ENCODE measurements at regions of chr11 and their contacts with region 1.

Region 1: GRCh38 chr11:76444384-76445123 is at the start of gene EMSY:
- DNase-seq: peak; percentile 99
- H3K4me3 ChIP-seq: peak within 1 kb of the TSS; percentile 83 to 99 (median 96)
- H3K27ac ChIP-seq: peak within 1 kb of the TSS; percentile 90 to 98 (median 96)
- H3K4me1 ChIP-seq: peaks cover 0 to 25% (median 22%) of the 10 kb centered on the region in 4 donors
- H3K27me3 ChIP-seq: no peaks in the 10 kb centered on the region
- CTCF ChIP-seq: no peak
- EP300 ChIP-seq: peak in 1 of 4 donors; percentile 44
- POLR2A ChIP-seq: peak; percentile 99
- total RNA-seq, gene EMSY: 20.8 to 51.8 (median 31.5) TPM

Region 2: DNA sequence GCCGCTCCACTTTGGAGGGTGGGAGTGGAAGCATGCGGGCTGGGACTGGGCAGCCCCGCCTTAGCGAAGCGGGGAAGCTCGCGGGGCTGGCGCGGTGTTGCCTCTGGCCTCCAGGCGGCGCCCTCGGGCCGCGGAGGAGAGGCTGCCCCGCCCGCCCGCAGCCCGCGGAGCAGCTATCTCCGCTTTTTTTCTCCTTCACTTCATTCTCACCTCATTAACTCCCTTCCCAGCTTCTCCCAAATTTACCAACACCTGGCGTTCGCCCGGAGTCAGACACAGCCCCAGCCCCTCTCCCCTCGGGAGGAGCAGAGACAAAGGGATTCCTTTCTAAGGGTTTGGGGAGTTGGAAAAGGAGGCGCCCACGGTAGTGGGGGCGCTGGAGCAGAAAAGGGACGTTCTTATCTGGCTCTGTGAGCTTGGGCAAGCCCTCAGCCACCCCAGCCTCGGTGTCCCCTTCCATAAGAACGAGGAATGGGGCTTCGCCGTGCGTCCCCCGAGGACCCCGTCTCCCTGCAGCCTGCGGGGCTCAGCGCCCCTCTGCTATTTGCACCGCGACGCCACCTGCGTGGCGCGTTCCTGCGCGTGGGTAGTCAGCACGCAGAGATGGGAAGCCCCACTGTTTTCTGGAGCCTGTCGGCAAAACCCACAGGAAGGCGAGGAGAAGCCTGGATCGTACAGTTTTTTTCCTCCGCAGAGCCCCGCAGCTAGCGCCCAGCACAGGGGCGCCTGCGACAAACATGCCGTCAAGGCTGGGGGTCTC is 236.7 kb before region 1 on chr11:
- intact Hi-C with region 1: loop called (anchors 10 kb)
- DNase-seq: peak; percentile 89
- H3K4me3 ChIP-seq: peak overlapping the region; percentile 22 to 53 (median 46)
- H3K27ac ChIP-seq: no peak overlapping the region
- H3K4me1 ChIP-seq: peaks cover 0 to 58% (median 51%) of the 10 kb centered on the region in 4 donors
- H3K27me3 ChIP-seq: peaks cover 14 to 89% (median 55%) of the 10 kb centered on the region in 3 donors
- CTCF ChIP-seq: peak; percentile 83 to 96 (median 92)
- EP300 ChIP-seq: no peak
- POLR2A ChIP-seq: no peak

Region 3: DNA sequence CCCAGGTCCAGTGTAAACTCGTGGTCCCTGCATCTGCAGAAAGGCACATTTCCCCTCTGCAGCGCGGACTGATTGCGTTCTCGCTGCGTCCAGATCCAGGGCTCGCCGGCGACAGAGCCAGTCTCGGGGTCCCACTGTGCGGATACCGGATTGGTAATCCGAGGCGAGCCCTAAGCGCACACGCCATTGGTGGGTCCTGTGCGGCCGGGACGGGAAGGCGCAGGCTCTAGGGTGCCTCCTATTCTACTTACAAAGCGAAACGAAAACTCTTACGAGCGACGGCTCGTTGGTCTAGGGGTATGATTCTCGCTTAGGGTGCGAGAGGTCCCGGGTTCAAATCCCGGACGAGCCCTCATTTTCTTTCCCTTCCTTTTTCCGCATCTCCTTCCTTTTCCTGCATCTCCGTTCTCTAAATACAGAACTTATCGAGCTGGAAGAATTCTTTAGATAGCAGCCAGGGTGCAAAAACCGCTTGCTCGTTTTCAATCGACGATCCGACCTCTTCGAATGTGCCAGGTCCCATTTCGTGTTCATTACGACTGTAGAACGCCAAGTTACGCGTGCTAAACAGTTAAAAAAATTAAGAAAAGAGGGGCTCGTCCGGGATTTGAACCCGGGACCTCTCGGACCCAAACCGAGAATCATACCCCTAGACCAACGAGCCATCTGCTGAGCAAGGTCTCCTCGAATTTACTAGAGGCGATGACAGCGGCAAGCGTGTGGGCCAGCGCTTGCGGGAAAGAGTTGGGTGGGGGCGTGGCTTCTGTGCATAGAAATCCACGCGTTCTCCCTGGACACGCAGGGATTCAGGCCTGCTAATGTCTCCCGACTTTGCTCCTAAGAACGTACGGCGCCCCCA is 209.1 kb before region 1 on chr11:
- intact Hi-C with region 1: loop called (anchors 1 kb)
- DNase-seq: peak; percentile 95
- H3K4me3 ChIP-seq: peak overlapping the region; percentile 48 to 83 (median 74)
- H3K27ac ChIP-seq: peak overlapping the region; percentile 83 to 90 (median 89)
- H3K4me1 ChIP-seq: peaks cover 0 to 23% (median 17%) of the 10 kb centered on the region in 4 donors
- H3K27me3 ChIP-seq: no peaks in the 10 kb centered on the region
- CTCF ChIP-seq: no peak
- EP300 ChIP-seq: no peak
- POLR2A ChIP-seq: peak in 1 of 2 donors; percentile 33

Region 4: DNA sequence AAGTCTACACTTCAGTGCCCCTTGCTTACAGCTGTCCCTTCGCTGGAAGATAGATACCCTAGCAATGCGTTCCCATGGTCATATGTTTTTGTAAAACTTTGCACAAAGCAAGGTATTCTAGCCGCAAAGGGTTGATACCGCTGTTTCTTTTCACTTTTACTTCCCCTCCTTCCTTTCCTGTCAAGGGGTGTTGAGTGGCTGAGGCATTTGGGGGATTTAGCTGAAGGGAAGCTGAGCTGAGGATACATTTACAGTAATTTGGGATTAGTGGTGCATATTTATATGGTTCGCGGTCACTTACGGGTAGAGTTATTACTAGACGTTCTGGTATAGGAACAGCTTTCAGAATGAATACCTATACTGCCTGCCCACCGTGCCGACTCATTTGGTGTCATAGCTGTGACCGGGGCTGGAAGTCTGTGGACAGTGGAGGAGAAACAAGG is 151.3 kb before region 1 on chr11:
- intact Hi-C with region 1: no loop called
- DNase-seq: no peak
- H3K4me3 ChIP-seq: no peak overlapping the region
- H3K27ac ChIP-seq: no peak overlapping the region
- H3K4me1 ChIP-seq: no peaks in the 10 kb centered on the region
- H3K27me3 ChIP-seq: no peaks in the 10 kb centered on the region
- CTCF ChIP-seq: no peak
- EP300 ChIP-seq: no peak
- POLR2A ChIP-seq: no peak

Region 5: GRCh38 chr11:76380967-76381719 is 63.4 kb before region 1 on chr11 and contains the starts of genes GVQW3 and THAP12:
- intact Hi-C with region 1: loop called (anchors 1 kb)
- DNase-seq: peak; percentile 99
- H3K4me3 ChIP-seq: peak within 1 kb of the TSS; percentile 69 to 92 (median 86)
- H3K27ac ChIP-seq: peak within 1 kb of the TSS; percentile 82 to 86 (median 86)
- H3K4me1 ChIP-seq: peaks cover 0 to 43% (median 28%) of the 10 kb centered on the region in 4 donors
- H3K27me3 ChIP-seq: no peaks in the 10 kb centered on the region
- CTCF ChIP-seq: no peak
- EP300 ChIP-seq: peak in 1 of 4 donors; percentile 25
- POLR2A ChIP-seq: peak in 1 of 2 donors; percentile 23
- total RNA-seq, gene GVQW3: 0.41 to 4.7 (median 2.2) TPM
- total RNA-seq, gene THAP12: 27.7 to 35.0 (median 31.4) TPM

Region 6: GRCh38 chr11:76526878-76527277 is 82.3 kb after region 1 on chr11:
- intact Hi-C with region 1: no loop called
- DNase-seq: no peak
- H3K4me3 ChIP-seq: no peak overlapping the region
- H3K27ac ChIP-seq: no peak overlapping the region
- H3K4me1 ChIP-seq: peaks cover 0 to 6% (median 2%) of the 10 kb centered on the region in 4 donors
- H3K27me3 ChIP-seq: no peaks in the 10 kb centered on the region
- CTCF ChIP-seq: no peak
- EP300 ChIP-seq: no peak
- POLR2A ChIP-seq: no peak

Region 7: DNA sequence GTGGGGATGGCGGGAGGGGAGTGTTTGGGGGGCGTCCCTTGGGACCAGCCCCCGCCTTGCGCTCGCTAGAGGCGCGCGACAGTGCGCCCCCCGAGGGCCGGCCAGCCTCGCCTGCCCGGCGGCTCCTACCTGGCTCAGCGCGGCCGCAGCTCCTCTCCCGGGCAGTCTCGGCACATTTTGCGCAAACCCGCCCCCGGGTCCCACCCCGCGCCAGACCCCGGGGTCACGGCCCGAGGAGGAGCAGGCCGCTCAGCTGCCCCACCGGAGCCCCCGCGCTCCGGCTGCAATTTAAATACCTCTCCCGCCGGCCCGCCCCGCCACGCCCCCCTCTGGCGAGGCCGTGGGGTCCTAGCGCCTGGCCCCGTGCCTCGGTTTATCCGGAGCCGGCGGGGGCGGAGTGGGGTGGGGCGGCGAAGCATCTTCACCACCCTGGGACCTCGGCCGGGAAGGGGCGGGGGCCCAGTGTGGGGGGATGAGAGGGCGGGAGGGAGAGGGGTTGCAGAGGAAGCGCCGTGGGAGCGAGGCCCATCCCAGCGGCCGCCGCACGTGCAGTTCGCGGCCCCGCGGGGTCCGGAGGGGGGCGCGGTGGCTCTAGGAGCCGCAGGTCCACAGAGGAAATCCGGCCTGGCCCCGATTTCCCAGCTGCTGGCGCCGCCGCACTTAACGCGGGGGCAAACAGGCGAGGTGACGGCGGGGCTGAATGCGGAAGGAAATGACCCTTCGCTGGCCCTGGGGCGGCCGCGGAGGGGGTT is 226.1 kb after region 1 on chr11 and contains the start of gene LRRC32:
- intact Hi-C with region 1: loop called (anchors 10 kb)
- DNase-seq: peak; percentile 77
- H3K4me3 ChIP-seq: peak within 1 kb of the TSS; percentile 31 to 57 (median 49)
- H3K27ac ChIP-seq: peak within 1 kb of the TSS; percentile 43 to 76 (median 68)
- H3K4me1 ChIP-seq: peaks cover 0 to 24% (median 15%) of the 10 kb centered on the region in 4 donors
- H3K27me3 ChIP-seq: peaks cover 6 to 25% (median 8%) of the 10 kb centered on the region in 3 donors
- CTCF ChIP-seq: no peak
- EP300 ChIP-seq: no peak
- POLR2A ChIP-seq: no peak
- total RNA-seq, gene LRRC32: 6.4 to 30.7 (median 16.2) TPM

Region 8: GRCh38 chr11:77066229-77067042 is 621.9 kb after region 1 on chr11 and contains the start of gene CAPN5:
- intact Hi-C with region 1: loop called (anchors 10 kb)
- DNase-seq: peak; percentile 95
- H3K4me3 ChIP-seq: peak within 1 kb of the TSS; percentile 56 to 77 (median 66)
- H3K27ac ChIP-seq: peak within 1 kb of the TSS; percentile 85 to 97 (median 94)
- H3K4me1 ChIP-seq: peaks cover 0 to 29% (median 24%) of the 10 kb centered on the region in 4 donors
- H3K27me3 ChIP-seq: no peaks in the 10 kb centered on the region
- CTCF ChIP-seq: peak in 3 of 4 experiments; percentile 34 to 38 (median 37)
- EP300 ChIP-seq: no peak
- POLR2A ChIP-seq: peak; percentile 83 to 92
- total RNA-seq, gene CAPN5: 4.1 to 12.5 (median 6.7) TPM